Calu3 (cell line): ENCODE measurements at regions of chr9 and their contacts with region 1.

Region 1: GRCh38 chr9:114779352-114779845 is 26.4 kb downstream of the TNFSF15 start:
- DNase-seq: peak; percentile 89
- H3K4me3 Mint-ChIP-seq: no peak overlapping the region
- H3K27ac Mint-ChIP-seq: peak overlapping the region; percentile 75
- H3K4me1 Mint-ChIP-seq: peaks cover 41% of the 10 kb centered on the region
- H3K27me3 Mint-ChIP-seq: peaks cover 10% of the 10 kb centered on the region
- CTCF ChIP-seq: no peak

Region 2: GRCh38 chr9:114691046-114691955 is 88.1 kb before region 1 on chr9:
- CTCF ChIA-PET with region 1: no interaction called
- intact Hi-C with region 1: loop called (anchors 5 kb)
- DNase-seq: peak; percentile 5
- H3K4me3 Mint-ChIP-seq: no peak overlapping the region
- H3K27ac Mint-ChIP-seq: peak overlapping the region; percentile 23
- H3K4me1 Mint-ChIP-seq: peaks cover 34% of the 10 kb centered on the region
- H3K27me3 Mint-ChIP-seq: peaks cover 12% of the 10 kb centered on the region
- CTCF ChIP-seq: no peak